ENCODE measurements at regions of chr21 and their contacts with region 1.

Region 1: GRCh38 chr21:41879190-41879998 is at the start of gene PRDM15:
- DNase-seq: peak; percentile 91 to 93 (median 92)
- ATAC-seq: peak; percentile 69
- H3K4me3 ChIP-seq: peak within 1 kb of the TSS; percentile 89
- H3K27ac ChIP-seq: peak within 1 kb of the TSS; percentile 96
- H3K4me1 ChIP-seq: peaks cover 20 to 27% of the 10 kb centered on the region in 2 experiments
- H3K27me3 ChIP-seq: no peaks in the 10 kb centered on the region
- CTCF ChIP-seq: no peak
- EP300 ChIP-seq: no peak
- POLR2A ChIP-seq: peak; percentile 72
- RAD21 ChIP-seq: no peak
- polyA plus RNA-seq, gene PRDM15: 0.93 to 1.0 TPM

Region 2: GRCh38 chr21:41957991-41958766 is 78.8 kb after region 1 on chr21:
- CTCF ChIA-PET with region 1: no interaction called
- POLR2A ChIA-PET with region 1: interaction called, 5 read pairs
- in situ Hi-C with region 1: no loop called
- intact Hi-C with region 1: loop called (anchors 5 kb)
- DNase-seq: peak; percentile 66 to 89 (median 75)
- ATAC-seq: peak; percentile 65
- H3K4me3 ChIP-seq: no peak overlapping the region
- H3K27ac ChIP-seq: peak overlapping the region; percentile 76
- H3K4me1 ChIP-seq: peaks cover 31 to 53% of the 10 kb centered on the region in 2 experiments
- H3K27me3 ChIP-seq: peaks cover 15 to 26% of the 10 kb centered on the region in 2 experiments
- CTCF ChIP-seq: peak; percentile 37 to 51 (median 50); a peak in 5 of 6 replicates
- EP300 ChIP-seq: peak; percentile 56; the same call in 1 of the 2 replicates
- POLR2A ChIP-seq: no peak
- RAD21 ChIP-seq: peak in 1 of 2 experiments; percentile 63; a peak in 2 of 4 replicates

Measured in K562 (cell line).